Right ventricle myocardium superior (tissue), 1 donor: ENCODE measurements at regions of chr11 and their contacts with region 1.

Region 1: DNA sequence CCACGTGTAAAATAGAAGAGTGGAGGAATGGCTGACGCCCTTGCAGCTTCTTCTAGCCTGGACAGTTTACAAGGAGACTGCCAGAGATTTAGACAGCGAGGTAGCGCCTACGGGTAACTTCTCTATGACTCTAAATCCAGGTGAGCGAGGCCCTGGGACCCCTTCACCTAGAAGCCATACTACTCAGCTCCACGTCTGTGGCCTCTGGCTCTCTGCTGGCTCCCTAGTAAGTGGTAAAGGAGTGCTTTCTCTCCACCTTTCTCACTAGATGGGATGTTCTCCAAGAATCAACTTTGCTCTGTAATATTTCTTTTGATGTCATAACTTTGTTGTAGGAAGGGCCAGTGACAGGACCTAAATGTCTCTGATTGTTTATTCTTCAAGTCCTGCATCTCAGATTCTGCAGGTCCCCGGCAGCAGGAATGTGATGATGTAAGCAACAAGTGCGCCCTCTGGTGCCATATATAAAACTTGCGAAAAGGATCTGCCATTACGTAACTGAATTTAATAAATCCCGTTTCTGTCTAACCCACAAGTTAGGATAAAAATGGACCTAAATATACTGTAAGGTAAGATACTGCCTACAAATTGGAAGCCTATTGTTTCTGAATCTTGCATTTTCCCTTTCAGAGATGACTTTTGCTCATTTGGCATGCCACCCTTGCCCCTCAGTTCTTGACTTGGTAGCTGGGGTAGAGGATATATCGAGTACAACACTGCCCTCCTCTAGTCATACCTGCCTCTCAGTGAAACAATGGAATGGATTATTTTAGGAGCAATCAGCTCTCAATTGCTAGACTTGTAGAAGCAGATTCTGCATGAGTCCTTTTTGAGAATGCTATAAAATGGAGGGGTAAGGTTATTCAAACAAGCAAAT is 11.0 kb upstream of the PTPN5 start:
- DNase-seq: no peak
- ATAC-seq: peak; percentile 52

Region 2: GRCh38 chr11:18115360-18116127 is 687.1 kb before region 1 on chr11:
- intact Hi-C with region 1: loop called (anchors 10 kb)
- DNase-seq: no peak
- ATAC-seq: peak; percentile 87

Region 3: DNA sequence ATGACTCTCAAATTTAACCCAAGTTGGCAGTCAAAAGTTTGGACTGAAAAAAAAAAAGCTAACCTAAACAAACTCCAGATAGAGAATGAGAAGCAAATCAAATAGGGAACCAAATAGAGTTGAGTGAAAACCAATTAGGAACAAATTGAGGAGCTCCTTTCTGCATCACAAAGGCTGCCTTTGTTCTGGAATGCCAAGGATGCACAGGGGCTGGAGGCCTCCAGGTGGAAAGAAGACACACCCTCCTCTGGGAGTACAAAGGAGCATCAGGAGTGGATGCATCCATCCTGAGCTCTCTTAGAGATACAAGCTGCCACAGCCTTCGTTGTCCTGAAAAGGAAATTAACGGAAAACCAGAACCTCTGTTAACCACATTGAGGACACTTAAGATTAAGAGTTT is 63.3 kb after region 1 on chr11:
- intact Hi-C with region 1: no loop called
- DNase-seq: no peak
- ATAC-seq: no peak